ENCODE measurements at regions of chr3 and their contacts with region 1.

Region 1: DNA sequence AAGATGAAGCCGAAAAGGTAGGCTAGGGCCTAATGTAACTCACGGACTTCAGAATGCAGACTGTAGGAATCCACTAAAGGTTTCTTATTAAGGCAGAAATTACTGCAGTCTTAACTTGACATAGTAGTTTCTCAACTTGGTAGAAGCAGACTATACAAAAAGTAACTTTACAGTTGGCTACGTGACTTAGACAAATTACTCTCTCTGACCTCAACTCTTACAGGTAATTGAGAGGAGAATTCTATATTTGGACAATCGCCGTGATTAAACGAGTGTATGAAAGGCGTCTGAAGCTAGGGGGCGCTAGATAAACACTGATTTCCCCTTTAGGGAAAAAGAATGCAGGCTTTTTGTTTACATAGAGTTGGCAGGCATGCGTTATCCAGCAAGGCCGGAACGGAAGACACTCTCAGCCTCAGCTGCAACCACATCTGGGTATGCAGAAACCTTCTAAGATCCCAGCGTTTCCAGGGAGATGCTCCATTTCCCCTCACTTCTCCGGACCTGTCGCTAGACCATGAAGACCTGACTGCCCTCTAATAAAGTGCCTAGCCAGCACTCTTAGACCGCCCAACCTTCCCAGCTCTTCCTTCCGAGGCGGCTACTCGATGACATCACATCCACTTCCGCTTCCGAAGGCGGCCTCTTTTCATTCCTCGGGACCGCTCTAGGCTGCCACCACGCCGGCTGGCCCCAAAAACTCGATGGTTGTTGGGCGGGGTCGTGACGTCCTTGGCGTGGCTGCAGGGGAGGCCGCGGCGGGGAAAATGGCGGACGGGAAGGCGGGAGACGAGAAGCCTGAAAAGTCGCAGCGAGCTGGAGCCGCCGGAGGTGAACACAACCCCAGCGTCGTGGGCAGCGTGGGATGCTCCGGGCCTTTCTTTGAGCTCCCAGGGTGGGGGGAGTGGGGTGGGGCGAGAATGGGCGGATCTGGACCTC is at the start of gene PCNP:
- DNase-seq: peak; percentile 98 to 99 (median 99)
- H3K4me3 ChIP-seq: peak within 1 kb of the TSS; percentile 72 to 91
- H3K4me3 Mint-ChIP-seq: peak within 1 kb of the TSS; percentile 92 to 99 (median 97)
- H3K27ac ChIP-seq: peak within 1 kb of the TSS; percentile 98
- H3K27ac Mint-ChIP-seq: peak within 1 kb of the TSS; percentile 95 to 100 (median 99)
- H3K4me1 ChIP-seq: peaks cover 63% of the 10 kb centered on the region
- H3K4me1 Mint-ChIP-seq: peaks cover 46 to 78% (median 62%) of the 10 kb centered on the region in 4 donors
- H3K27me3 ChIP-seq: no peaks in the 10 kb centered on the region
- H3K27me3 Mint-ChIP-seq: no peaks in the 10 kb centered on the region
- total RNA-seq, gene PCNP: 172 to 189 TPM

Region 2: DNA sequence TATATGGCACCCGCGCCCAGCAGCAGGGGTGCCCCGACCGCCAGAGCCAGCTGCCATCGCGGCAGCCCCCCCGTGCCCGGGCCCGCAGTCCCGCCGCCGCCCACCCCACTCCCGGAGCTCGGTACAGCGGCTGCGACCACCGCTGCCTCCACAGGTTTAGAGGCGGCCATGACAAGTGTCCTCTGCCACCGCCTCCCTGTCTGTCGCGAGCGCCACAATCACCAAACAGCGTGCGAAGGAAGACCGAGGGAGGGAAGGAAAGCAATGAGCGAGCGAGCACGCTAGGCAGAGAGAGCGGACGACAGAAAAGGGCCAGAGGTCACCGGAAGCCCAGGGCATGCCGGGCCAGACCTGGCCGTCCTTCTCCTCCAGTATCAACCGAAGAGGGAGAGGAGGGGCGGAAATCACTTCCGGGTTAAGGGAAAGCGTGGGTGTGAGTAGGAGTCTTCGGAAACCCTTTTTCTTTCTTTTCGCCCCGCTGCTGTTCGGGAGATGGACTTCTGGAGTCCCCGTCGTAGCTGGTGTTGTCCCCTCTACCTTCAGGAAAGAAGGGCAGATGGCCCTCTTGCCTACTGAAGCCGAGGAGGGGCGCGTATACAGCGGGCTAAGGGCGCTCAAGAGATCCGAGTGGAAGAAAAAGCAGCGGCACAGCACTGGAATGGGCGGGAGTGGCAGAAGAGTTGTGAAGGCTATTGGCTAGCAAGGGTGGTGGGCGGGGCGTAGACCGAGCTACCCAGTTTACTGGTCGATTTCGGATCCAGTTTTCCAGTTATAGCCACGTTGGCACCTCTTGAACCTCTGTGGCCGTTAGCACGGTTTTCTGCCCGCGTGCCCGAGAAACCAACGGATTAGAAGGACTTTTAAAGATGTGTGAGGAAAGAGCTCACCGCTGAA is 1172.7 kb before region 1 on chr3 and contains the starts of genes LNP1 and TOMM70:
- CTCF ChIA-PET with region 1: no interaction called
- POLR2A ChIA-PET with region 1: interaction called, 3 read pairs
- intact Hi-C with region 1: loop called (anchors 2 kb)
- DNase-seq: peak; percentile 94 to 97 (median 95)
- H3K4me3 ChIP-seq: peak within 1 kb of the TSS; percentile 83 to 98
- H3K4me3 Mint-ChIP-seq: peak within 1 kb of the TSS; percentile 96 to 99 (median 97)
- H3K27ac ChIP-seq: peak within 1 kb of the TSS; percentile 85
- H3K27ac Mint-ChIP-seq: peak within 1 kb of the TSS; percentile 95 to 99 (median 97)
- H3K4me1 ChIP-seq: peaks cover 52% of the 10 kb centered on the region
- H3K4me1 Mint-ChIP-seq: peaks cover 36 to 73% (median 57%) of the 10 kb centered on the region in 4 donors
- H3K27me3 ChIP-seq: no peaks in the 10 kb centered on the region
- H3K27me3 Mint-ChIP-seq: no peaks in the 10 kb centered on the region
- total RNA-seq, gene LNP1: 1.8 to 2.2 TPM
- total RNA-seq, gene TOMM70: 34.7 to 37.5 TPM

Region 3: DNA sequence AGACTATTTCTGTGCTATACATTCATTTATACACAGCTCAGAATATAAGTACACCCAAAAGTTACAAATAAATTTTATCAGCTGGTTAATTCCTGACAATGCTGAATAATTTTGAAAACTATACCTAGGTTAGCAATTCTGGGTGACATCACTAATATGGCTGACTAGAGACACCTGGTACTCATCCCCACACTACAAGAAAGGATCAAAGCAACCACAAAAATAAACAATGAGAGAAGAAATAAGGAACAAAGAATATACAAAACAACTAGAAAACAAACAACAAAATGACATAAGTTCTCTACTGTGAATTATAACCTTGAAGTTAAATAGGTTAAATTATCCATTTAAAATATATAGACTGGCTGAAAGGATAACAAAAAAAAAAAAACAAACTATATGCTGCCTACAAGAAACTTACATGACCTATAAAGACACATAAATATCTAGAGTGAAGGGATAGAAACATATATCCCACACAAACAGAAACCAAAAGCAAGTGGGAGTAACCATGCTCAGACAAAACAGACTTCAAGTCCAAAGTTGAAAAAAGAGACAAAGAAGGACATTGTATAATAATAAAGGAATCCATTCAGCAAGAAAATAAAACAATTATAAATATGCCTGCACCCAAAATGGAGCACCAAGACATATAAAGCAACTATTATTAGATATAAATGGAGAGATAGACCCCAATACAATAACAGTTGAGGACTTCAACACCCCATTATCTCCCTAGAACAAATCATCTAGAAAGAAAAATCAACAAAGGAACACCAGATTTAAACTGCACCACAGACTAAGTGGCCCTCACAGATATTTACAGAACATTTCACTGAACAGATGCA is 311.1 kb before region 1 on chr3:
- CTCF ChIA-PET with region 1: no interaction called
- POLR2A ChIA-PET with region 1: no interaction called
- intact Hi-C with region 1: no loop called
- DNase-seq: no peak
- H3K4me3 ChIP-seq: no peak overlapping the region
- H3K4me3 Mint-ChIP-seq: no peak overlapping the region
- H3K27ac ChIP-seq: no peak overlapping the region
- H3K27ac Mint-ChIP-seq: no peak overlapping the region
- H3K4me1 ChIP-seq: no peaks in the 10 kb centered on the region
- H3K4me1 Mint-ChIP-seq: no peaks in the 10 kb centered on the region
- H3K27me3 ChIP-seq: no peaks in the 10 kb centered on the region
- H3K27me3 Mint-ChIP-seq: no peaks in the 10 kb centered on the region

Region 4: GRCh38 chr3:101311676-101312075 is 262.0 kb before region 1 on chr3:
- CTCF ChIA-PET with region 1: no interaction called
- POLR2A ChIA-PET with region 1: no interaction called
- intact Hi-C with region 1: no loop called
- DNase-seq: no peak
- H3K4me3 ChIP-seq: no peak overlapping the region
- H3K4me3 Mint-ChIP-seq: no peak overlapping the region
- H3K27ac ChIP-seq: no peak overlapping the region
- H3K27ac Mint-ChIP-seq: no peak overlapping the region
- H3K4me1 ChIP-seq: no peaks in the 10 kb centered on the region
- H3K4me1 Mint-ChIP-seq: no peaks in the 10 kb centered on the region
- H3K27me3 ChIP-seq: no peaks in the 10 kb centered on the region
- H3K27me3 Mint-ChIP-seq: no peaks in the 10 kb centered on the region

Region 5: GRCh38 chr3:101381809-101382208 is 191.9 kb before region 1 on chr3:
- CTCF ChIA-PET with region 1: no interaction called
- POLR2A ChIA-PET with region 1: interaction called, 5 read pairs
- intact Hi-C with region 1: loop called (anchors 5 kb)
- DNase-seq: peak in 4 of 5 donors; percentile 25 to 40 (median 32)
- H3K4me3 ChIP-seq: no peak overlapping the region
- H3K4me3 Mint-ChIP-seq: no peak overlapping the region
- H3K27ac ChIP-seq: no peak overlapping the region
- H3K27ac Mint-ChIP-seq: peak overlapping the region in 2 of 7 donors; percentile 5 to 57
- H3K4me1 ChIP-seq: peaks cover 21% of the 10 kb centered on the region
- H3K4me1 Mint-ChIP-seq: peaks cover 37 to 66% (median 52%) of the 10 kb centered on the region in 4 donors
- H3K27me3 ChIP-seq: no peaks in the 10 kb centered on the region
- H3K27me3 Mint-ChIP-seq: no peaks in the 10 kb centered on the region

Region 6: GRCh38 chr3:101414121-101414520 is 159.6 kb before region 1 on chr3:
- CTCF ChIA-PET with region 1: no interaction called
- POLR2A ChIA-PET with region 1: no interaction called
- intact Hi-C with region 1: no loop called
- DNase-seq: no peak
- H3K4me3 ChIP-seq: no peak overlapping the region
- H3K4me3 Mint-ChIP-seq: peak overlapping the region in 1 of 8 donors; percentile 9
- H3K27ac ChIP-seq: no peak overlapping the region
- H3K27ac Mint-ChIP-seq: peak overlapping the region in 5 of 7 donors; percentile 9 to 61 (median 48)
- H3K4me1 ChIP-seq: peaks cover 15% of the 10 kb centered on the region
- H3K4me1 Mint-ChIP-seq: peaks cover 26 to 48% (median 35%) of the 10 kb centered on the region in 4 donors
- H3K27me3 ChIP-seq: no peaks in the 10 kb centered on the region
- H3K27me3 Mint-ChIP-seq: no peaks in the 10 kb centered on the region

Region 7: GRCh38 chr3:101544161-101544850 is 29.4 kb before region 1 on chr3:
- CTCF ChIA-PET with region 1: interaction called, 5 read pairs
- POLR2A ChIA-PET with region 1: interaction called, 20 read pairs
- intact Hi-C with region 1: no loop called
- DNase-seq: peak in 2 of 5 donors; percentile 18 to 22
- H3K4me3 ChIP-seq: no peak overlapping the region
- H3K4me3 Mint-ChIP-seq: peak overlapping the region in 7 of 8 donors; percentile 2 to 66 (median 23)
- H3K27ac ChIP-seq: no peak overlapping the region
- H3K27ac Mint-ChIP-seq: peak overlapping the region; percentile 48 to 94 (median 78)
- H3K4me1 ChIP-seq: peaks cover 34% of the 10 kb centered on the region
- H3K4me1 Mint-ChIP-seq: peaks cover 29 to 48% (median 37%) of the 10 kb centered on the region in 4 donors
- H3K27me3 ChIP-seq: no peaks in the 10 kb centered on the region
- H3K27me3 Mint-ChIP-seq: no peaks in the 10 kb centered on the region

Region 8: GRCh38 chr3:101625879-101626278 is 52.2 kb after region 1 on chr3:
- CTCF ChIA-PET with region 1: no interaction called
- POLR2A ChIA-PET with region 1: no interaction called
- intact Hi-C with region 1: no loop called
- DNase-seq: no peak
- H3K4me3 ChIP-seq: no peak overlapping the region
- H3K4me3 Mint-ChIP-seq: no peak overlapping the region
- H3K27ac ChIP-seq: no peak overlapping the region
- H3K27ac Mint-ChIP-seq: no peak overlapping the region
- H3K4me1 ChIP-seq: no peaks in the 10 kb centered on the region
- H3K4me1 Mint-ChIP-seq: peaks cover 0 to 2% (median 0%) of the 10 kb centered on the region in 4 donors
- H3K27me3 ChIP-seq: no peaks in the 10 kb centered on the region
- H3K27me3 Mint-ChIP-seq: no peaks in the 10 kb centered on the region

Region 9: GRCh38 chr3:101676765-101677435 is 103.2 kb after region 1 on chr3 and contains the start of gene ZBTB11:
- CTCF ChIA-PET with region 1: interaction called, 21 read pairs
- POLR2A ChIA-PET with region 1: interaction called, 70 read pairs
- intact Hi-C with region 1: loop called (anchors 1 kb)
- DNase-seq: peak; percentile 99 to 100 (median 99)
- H3K4me3 ChIP-seq: peak within 1 kb of the TSS; percentile 78 to 94
- H3K4me3 Mint-ChIP-seq: peak within 1 kb of the TSS; percentile 92 to 99 (median 96)
- H3K27ac ChIP-seq: peak within 1 kb of the TSS; percentile 98
- H3K27ac Mint-ChIP-seq: peak within 1 kb of the TSS; percentile 97 to 99 (median 98)
- H3K4me1 ChIP-seq: peaks cover 44% of the 10 kb centered on the region
- H3K4me1 Mint-ChIP-seq: peaks cover 23 to 73% (median 41%) of the 10 kb centered on the region in 4 donors
- H3K27me3 ChIP-seq: no peaks in the 10 kb centered on the region
- H3K27me3 Mint-ChIP-seq: peaks cover 0 to 2% of the 10 kb centered on the region in 2 donors
- total RNA-seq, gene ZBTB11: 48.9 to 50.8 TPM

Region 10: GRCh38 chr3:101779047-101779821 is 205.5 kb after region 1 on chr3 and contains the start of gene NXPE3:
- CTCF ChIA-PET with region 1: interaction called, 5 read pairs
- POLR2A ChIA-PET with region 1: interaction called, 13 read pairs
- intact Hi-C with region 1: loop called (anchors 2 kb)
- DNase-seq: peak; percentile 92 to 95 (median 94)
- H3K4me3 ChIP-seq: peak within 1 kb of the TSS; percentile 63 to 90
- H3K4me3 Mint-ChIP-seq: peak within 1 kb of the TSS; percentile 89 to 98 (median 96)
- H3K27ac ChIP-seq: peak within 1 kb of the TSS; percentile 91
- H3K27ac Mint-ChIP-seq: peak within 1 kb of the TSS; percentile 97 to 99 (median 99)
- H3K4me1 ChIP-seq: peaks cover 49% of the 10 kb centered on the region
- H3K4me1 Mint-ChIP-seq: peaks cover 35 to 62% (median 47%) of the 10 kb centered on the region in 4 donors
- H3K27me3 ChIP-seq: no peaks in the 10 kb centered on the region
- H3K27me3 Mint-ChIP-seq: no peaks in the 10 kb centered on the region
- total RNA-seq, gene NXPE3: 35.7 to 37.2 TPM